ENCODE measurements at regions of chr3 and their contacts with region 1.

Region 1: GRCh38 chr3:44338010-44338827 is at the start of gene TCAIM:
- DNase-seq: peak; percentile 98
- H3K4me3 ChIP-seq: peak within 1 kb of the TSS; percentile 65 to 94 (median 68)
- H3K27ac ChIP-seq: peak within 1 kb of the TSS; percentile 55
- H3K4me1 ChIP-seq: peaks cover 9% of the 10 kb centered on the region
- H3K27me3 ChIP-seq: peaks cover 4 to 9% of the 10 kb centered on the region in 2 experiments
- CTCF ChIP-seq: no peak
- POLR2A ChIP-seq: peak; percentile 76
- total RNA-seq, gene TCAIM: 18.2 and 19.6 TPM in 2 replicates

Region 2: DNA sequence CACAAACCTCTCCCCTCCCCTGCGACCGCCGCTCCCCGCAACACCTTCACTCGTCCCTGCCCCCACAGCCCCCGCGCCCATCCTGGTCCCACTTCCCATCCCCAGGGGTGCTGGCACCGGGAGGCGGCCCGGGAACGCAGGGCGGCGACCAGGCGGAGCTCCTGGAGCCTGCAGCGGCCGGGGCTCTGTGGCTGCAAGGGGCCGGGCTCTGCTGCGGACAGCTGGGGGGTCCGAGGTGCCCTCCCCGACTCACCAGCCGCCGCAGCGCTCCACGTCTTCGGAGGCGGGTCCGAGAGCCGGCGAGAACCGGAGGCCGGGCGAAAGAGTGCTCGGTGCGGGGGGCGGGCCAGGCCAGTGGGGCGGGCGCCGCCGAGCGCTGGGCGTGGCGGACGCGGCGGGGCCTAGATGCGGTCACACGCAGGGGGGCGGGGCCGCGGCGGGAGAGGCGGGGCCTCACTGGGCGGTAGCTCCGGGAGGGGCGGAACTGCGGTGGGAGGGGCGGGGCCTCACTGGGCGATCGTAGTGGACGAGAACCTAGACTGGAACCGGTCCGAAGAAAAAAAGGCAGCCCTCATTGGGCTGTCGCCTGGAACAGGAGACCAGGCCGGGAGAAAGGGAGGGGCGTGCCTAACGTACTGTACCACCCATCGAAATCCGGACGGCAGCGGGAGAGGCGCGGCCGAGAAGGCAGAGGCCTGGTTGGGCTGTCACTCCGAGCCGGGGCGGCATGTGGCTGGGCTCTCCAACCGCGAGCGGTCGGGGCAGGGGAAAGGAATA is 716.4 kb before region 1 on chr3 and contains the start of gene ANO10:
- CTCF ChIA-PET with region 1: no interaction called
- POLR2A ChIA-PET with region 1: no interaction called
- dilution Hi-C with region 1: no loop called
- intact Hi-C with region 1: loop called (anchors 1 kb)
- DNase-seq: peak; percentile 99
- H3K4me3 ChIP-seq: peak within 1 kb of the TSS; percentile 75 to 83 (median 81)
- H3K27ac ChIP-seq: peak within 1 kb of the TSS; percentile 63
- H3K4me1 ChIP-seq: peaks cover 10% of the 10 kb centered on the region
- H3K27me3 ChIP-seq: no peaks in the 10 kb centered on the region
- CTCF ChIP-seq: no peak
- POLR2A ChIP-seq: peak; percentile 69
- total RNA-seq, gene ANO10: 40.9 and 45.8 TPM in 2 replicates

Region 3: GRCh38 chr3:44104668-44105321 is 233.4 kb before region 1 on chr3:
- CTCF ChIA-PET with region 1: no interaction called
- POLR2A ChIA-PET with region 1: no interaction called
- dilution Hi-C with region 1: no loop called
- intact Hi-C with region 1: no loop called
- DNase-seq: no peak
- H3K4me3 ChIP-seq: no peak overlapping the region
- H3K27ac ChIP-seq: no peak overlapping the region
- H3K4me1 ChIP-seq: no peaks in the 10 kb centered on the region
- H3K27me3 ChIP-seq: peaks cover 2 to 3% of the 10 kb centered on the region in 2 experiments
- CTCF ChIP-seq: no peak
- POLR2A ChIP-seq: no peak

Region 4: DNA sequence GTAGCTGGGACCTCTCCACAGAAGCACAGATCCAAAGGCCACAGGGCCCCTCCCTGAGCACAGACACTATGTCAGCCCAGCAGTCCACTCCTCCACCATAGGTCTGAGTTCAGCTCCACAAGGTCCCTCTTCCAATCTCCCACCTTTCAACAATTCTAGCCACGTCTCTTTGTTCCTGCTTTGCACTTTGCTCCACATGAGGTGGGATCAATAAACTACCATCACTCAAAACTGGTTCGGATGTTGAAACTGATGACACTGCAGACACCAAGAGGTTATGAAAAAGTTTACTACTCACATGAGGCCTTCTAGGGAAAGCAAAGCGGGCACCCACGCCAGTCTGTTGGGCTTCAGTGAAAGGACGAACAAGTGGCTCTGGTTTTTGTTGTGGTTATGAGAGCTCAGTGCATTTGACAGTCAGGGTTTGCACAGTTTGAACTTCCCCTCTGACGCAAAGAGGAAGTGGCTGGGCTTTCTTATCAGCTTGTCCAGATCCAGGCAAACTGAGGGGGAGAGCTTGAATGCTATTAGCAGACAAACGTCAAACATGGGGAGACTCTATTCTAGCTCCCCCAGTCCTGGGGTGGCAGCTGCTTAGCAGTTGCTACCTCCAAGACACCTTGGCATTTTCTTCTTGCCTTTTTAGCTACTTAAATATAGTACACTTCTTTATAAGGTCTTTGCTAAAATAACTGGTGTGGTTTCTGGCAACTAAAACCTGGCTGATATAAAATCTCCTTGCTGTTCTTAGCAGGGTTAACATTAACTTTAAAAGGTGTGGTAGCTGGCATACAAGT is 101.5 kb after region 1 on chr3:
- CTCF ChIA-PET with region 1: interaction called, 4 read pairs
- POLR2A ChIA-PET with region 1: no interaction called
- dilution Hi-C with region 1: no loop called
- intact Hi-C with region 1: loop called (anchors 1 kb)
- DNase-seq: peak; percentile 97
- H3K4me3 ChIP-seq: no peak overlapping the region
- H3K27ac ChIP-seq: peak overlapping the region; percentile 96
- H3K4me1 ChIP-seq: peaks cover 16% of the 10 kb centered on the region
- H3K27me3 ChIP-seq: no peaks in the 10 kb centered on the region
- CTCF ChIP-seq: no peak
- POLR2A ChIP-seq: peak; percentile 33

Region 5: DNA sequence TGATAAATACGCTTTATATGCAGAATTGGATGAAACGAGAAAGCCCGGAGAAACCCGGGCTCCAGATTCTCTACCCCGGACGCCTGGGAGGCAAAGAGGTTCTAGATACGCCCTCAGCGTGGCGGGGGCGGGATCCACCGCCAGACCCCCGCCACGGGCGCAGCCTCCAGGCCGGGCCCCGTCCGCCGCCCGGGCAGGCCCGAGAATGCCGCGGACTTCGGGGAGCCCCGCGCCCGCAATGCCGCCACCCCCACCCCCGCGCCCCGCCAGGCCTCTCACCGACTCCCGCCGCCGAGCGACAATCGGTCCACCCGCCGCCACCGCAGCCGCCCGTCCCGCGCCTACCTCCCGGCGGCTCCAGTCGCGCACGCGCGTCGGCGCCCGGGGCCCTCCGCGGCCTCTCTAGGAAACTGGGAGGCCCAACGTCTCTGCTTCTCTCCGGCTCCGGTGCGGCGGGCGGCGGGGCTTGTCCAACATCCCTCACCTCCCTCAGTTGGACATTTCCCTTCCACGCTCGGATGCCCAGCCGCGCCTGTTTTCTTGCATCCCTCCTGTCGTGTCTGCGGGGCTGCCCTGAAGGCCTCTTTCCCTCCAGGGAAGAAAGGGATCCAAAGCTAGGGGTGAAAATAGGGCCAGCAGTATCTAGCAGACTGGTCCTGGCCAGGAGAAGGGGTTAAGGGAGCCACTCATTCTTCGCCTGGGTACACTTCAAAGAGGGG is 139.3 kb after region 1 on chr3 and contains the start of gene ZNF445:
- CTCF ChIA-PET with region 1: no interaction called
- POLR2A ChIA-PET with region 1: no interaction called
- dilution Hi-C with region 1: no loop called
- intact Hi-C with region 1: loop called (anchors 1 kb)
- DNase-seq: peak; percentile 78
- H3K4me3 ChIP-seq: peak within 1 kb of the TSS; percentile 61 to 98 (median 98)
- H3K27ac ChIP-seq: peak within 1 kb of the TSS; percentile 35
- H3K4me1 ChIP-seq: peaks cover 11% of the 10 kb centered on the region
- H3K27me3 ChIP-seq: no peaks in the 10 kb centered on the region
- CTCF ChIP-seq: no peak
- POLR2A ChIP-seq: peak; percentile 79
- total RNA-seq, gene ZNF445: 15.0 and 17.8 TPM in 2 replicates

Region 6: DNA sequence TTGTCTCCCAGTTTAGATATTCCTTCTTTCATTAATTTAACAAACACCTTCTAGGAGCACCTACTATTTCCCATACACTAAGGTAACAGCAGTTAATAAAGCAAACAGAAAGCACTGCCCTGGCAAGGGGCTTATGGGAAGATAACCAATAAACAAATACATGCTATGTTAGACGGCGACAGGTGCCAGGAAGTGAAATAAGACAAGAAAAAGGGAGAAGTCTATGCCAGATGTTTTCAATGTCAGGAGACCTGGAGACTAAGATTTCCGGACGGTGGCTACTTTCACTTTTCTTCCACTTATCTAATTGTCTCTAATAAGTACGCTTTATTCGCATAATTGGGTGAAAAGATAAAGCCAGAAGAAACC is 171.8 kb after region 1 on chr3:
- CTCF ChIA-PET with region 1: no interaction called
- POLR2A ChIA-PET with region 1: no interaction called
- dilution Hi-C with region 1: no loop called
- intact Hi-C with region 1: loop called (anchors 1 kb)
- DNase-seq: peak; percentile 49
- H3K4me3 ChIP-seq: peak overlapping the region; percentile 80 to 98 (median 88)
- H3K27ac ChIP-seq: peak overlapping the region; percentile 58
- H3K4me1 ChIP-seq: peaks cover 13% of the 10 kb centered on the region
- H3K27me3 ChIP-seq: no peaks in the 10 kb centered on the region
- CTCF ChIP-seq: no peak
- POLR2A ChIP-seq: no peak

Region 7: DNA sequence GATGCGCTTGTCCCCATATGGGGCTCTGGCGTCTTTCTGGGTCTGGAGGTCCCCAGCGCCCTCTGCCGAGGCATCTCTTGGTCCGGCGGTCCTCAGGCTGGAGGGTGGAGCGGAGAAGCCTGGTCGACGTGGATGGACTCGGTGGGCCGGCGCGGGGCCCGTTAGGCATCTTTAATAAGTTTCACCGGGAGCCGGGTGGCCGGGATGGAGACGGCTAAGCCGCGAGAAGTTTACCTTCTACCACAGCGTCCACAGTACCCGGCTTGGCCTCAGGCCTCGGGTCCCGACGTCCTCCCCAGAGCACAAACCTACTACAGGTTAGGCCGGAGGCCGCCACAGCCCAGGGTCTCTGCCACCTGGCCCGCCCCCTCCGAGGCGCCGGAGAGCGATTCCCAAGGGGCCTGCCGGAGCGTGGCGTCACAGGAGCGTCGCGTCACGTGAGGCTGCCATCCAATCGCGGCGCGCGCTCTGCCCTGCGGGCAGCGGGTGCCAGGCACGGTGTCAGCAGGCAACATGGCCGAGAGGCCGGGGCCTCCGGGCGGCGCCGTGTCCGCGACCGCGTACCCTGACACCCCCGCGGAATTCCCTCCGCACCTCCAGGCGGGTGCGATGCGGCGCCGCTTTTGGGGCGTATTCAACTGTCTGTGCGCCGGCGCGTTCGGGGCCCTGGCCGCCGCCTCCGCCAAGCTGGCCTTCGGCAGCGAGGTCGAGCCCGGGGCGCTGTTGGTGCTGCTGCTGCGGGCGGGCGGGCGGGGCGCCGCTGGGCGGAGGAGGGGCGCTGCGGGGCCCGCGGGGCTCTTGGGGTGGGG is 523.4 kb after region 1 on chr3 and contains the start of gene TMEM42:
- CTCF ChIA-PET with region 1: no interaction called
- POLR2A ChIA-PET with region 1: no interaction called
- dilution Hi-C with region 1: no loop called
- intact Hi-C with region 1: loop called (anchors 2 kb)
- DNase-seq: peak; percentile 95
- H3K4me3 ChIP-seq: peak within 1 kb of the TSS; percentile 66 to 88 (median 72)
- H3K27ac ChIP-seq: peak within 1 kb of the TSS; percentile 71
- H3K4me1 ChIP-seq: peaks cover 7% of the 10 kb centered on the region
- H3K27me3 ChIP-seq: no peaks in the 10 kb centered on the region
- CTCF ChIP-seq: peak in 1 of 2 donors; percentile 40
- POLR2A ChIP-seq: peak; percentile 86
- total RNA-seq, gene TMEM42: 10.6 and 13.6 TPM in 2 replicates

Region 8: GRCh38 chr3:44883999-44884431 is 545.8 kb after region 1 on chr3:
- CTCF ChIA-PET with region 1: no interaction called
- POLR2A ChIA-PET with region 1: no interaction called
- dilution Hi-C with region 1: no loop called
- intact Hi-C with region 1: loop called (anchors 1 kb)
- DNase-seq: peak; percentile 90
- H3K4me3 ChIP-seq: no peak overlapping the region
- H3K27ac ChIP-seq: peak overlapping the region; percentile 91
- H3K4me1 ChIP-seq: peaks cover 38% of the 10 kb centered on the region
- H3K27me3 ChIP-seq: no peaks in the 10 kb centered on the region
- CTCF ChIP-seq: no peak
- POLR2A ChIP-seq: no peak